PC-3 (cell line): ENCODE measurements at regions of chr19 and their contacts with region 1.

Region 1: DNA sequence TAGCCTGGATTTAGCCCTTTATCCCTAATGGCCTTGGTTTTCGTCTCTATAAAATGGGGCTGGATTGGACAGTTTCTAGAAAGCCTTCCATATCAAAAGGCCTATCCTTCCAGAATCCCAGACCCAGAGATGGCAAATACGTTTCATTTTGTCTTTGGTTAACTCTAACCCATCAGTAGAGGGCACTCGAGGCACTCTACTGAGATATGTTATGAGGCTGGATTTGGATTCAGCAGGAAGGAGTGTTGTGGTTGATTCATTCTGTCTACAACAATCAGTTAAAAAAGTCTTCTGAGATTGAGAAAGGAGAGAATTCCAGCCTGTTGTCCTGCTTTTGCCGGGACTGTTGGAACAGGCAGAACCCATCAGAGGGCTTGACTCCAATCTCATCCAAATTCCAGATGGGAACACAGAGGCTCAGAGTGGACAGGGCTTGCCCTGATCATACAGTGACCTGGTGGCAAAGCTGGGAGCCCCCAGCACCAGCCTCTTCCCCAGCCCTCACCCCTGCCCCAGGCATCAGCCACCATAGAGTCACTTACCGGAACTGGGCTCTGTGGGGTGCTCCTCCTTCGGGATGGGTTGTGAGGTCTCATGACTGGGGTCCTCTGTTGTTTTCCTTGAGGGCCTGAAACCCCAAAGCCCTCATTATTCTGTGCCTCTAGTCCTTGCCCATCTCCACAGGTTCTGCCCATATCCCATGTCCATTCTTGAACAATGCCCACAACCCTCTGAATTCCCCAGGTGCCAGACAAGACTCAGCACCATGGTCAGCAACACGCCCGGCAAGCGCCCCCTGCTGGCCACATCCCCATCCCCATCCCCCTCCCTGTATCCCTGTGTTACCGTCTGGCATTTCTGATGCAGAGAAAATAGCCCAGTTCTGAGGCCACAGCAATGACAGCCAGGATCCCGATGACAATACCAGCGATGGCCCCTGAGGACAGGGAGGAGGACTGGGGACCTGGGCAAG is 12.3 kb upstream of the ZNF180 start:
- DNase-seq: peak; percentile 66
- ATAC-seq: peak; percentile 81
- H3K4me3 ChIP-seq: no peak overlapping the region
- H3K27ac ChIP-seq: no peak overlapping the region
- H3K4me1 ChIP-seq: no peaks in the 10 kb centered on the region
- H3K27me3 ChIP-seq: peaks cover 8% of the 10 kb centered on the region; the same call in 1 of the 2 replicates
- CTCF ChIP-seq: peak; percentile 71

Region 2: GRCh38 chr19:44570984-44571684 is 58.5 kb after region 1 on chr19:
- CTCF ChIA-PET with region 1: no interaction called
- POLR2A ChIA-PET with region 1: no interaction called
- intact Hi-C with region 1: loop called (anchors 10 kb)
- DNase-seq: peak; percentile 85
- ATAC-seq: peak; percentile 84
- H3K4me3 ChIP-seq: no peak overlapping the region; the same call in 1 of the 2 replicates
- H3K27ac ChIP-seq: no peak overlapping the region
- H3K4me1 ChIP-seq: peaks cover 15% of the 10 kb centered on the region
- H3K27me3 ChIP-seq: peaks cover 14% of the 10 kb centered on the region
- CTCF ChIP-seq: peak; percentile 80